ENCODE measurements at regions of chr19 and their contacts with region 1.

Region 1: DNA sequence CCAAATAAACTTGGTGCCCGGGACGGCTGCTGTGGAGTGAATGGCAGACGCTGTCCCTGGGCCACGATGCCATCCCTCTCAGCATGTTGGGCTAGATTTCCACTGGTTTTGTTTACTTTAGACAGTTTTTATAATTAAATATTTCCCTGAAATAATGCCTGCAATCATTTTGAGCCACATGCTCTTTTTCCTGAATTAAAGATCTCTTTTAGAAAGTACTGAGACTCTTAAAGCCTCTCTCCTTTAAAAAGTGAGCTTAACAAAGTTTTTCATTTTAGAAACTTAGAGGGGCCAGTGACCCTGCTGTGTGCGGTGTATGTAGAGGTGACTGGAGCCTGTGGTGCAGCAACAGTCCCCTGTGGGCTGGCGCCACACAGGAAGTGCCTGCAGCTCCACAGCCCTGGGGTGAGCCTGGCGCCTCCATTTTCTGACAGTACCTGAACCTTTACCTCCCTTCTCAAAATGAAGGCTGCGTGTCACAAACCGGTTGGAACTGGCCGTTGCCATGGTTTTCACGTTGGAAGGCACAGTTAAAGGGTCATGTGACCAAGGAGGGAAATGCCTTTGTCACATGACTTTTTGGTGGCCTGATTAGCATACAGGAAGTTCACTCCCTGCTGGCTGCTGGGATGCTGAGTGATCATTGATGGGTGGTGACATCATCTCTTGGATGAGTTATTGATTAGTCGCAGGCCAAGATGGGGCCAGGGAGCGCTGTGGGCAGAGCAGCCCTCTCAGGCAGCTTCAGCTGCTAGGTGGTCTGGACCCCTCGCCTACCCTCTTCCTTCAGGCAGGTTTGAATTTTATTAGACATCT is 26.3 kb downstream of the TSSK6 start:
- DNase-seq: peak; percentile 98
- H3K4me3 Mint-ChIP-seq: peak overlapping the region; percentile 76
- H3K27ac Mint-ChIP-seq: peak overlapping the region; percentile 98
- H3K4me1 Mint-ChIP-seq: peaks cover 36% of the 10 kb centered on the region
- H3K27me3 Mint-ChIP-seq: no peaks in the 10 kb centered on the region

Region 2: DNA sequence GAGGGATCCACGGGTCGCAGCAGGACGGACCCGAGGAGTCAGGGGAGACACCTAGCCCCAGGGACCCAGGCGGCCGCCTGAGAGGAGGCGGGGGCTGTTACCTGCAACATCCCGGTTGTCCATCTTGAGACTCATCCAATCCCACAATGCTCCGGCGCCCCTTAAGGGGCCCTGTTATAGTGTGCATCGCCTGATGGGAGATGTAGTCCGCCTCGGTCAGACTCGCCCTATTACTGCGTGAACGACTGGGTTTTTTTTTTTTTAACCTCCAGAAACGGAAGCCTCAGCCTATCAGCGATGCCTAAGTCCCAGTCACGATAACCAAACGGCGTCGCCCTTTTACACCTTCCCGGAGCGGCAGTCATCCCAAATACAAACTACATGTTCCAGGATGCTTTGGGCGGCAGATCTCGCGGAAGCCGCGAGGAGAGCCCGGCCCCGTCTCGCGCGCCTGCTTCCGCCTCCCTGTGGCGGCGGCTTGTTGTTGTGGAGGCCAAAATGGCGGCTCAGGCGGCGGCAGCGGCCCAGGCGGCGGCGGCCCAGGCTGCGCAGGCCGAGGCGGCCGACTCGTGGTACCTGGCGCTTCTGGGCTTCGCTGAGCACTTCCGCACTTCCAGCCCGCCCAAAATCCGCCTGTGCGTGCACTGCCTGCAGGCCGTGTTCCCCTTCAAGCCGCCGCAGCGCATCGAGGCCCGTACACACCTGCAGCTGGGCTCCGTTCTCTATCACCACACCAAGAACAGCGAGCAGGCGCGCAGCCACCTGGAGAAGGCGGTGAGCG is 168.5 kb before region 1 on chr19 and contains the starts of genes MAU2 and SUGP1:
- intact Hi-C with region 1: loop called (anchors 1 kb)
- DNase-seq: peak; percentile 97
- H3K4me3 Mint-ChIP-seq: peak within 1 kb of the TSS; percentile 89
- H3K27ac Mint-ChIP-seq: peak within 1 kb of the TSS; percentile 99
- H3K4me1 Mint-ChIP-seq: peaks cover 35% of the 10 kb centered on the region
- H3K27me3 Mint-ChIP-seq: no peaks in the 10 kb centered on the region
- total RNA-seq, gene MAU2: 61.8 and 73.0 TPM in 2 replicates
- total RNA-seq, gene SUGP1: 71.2 and 72.0 TPM in 2 replicates

Region 3: GRCh38 chr19:19354932-19355331 is 134.2 kb before region 1 on chr19:
- intact Hi-C with region 1: no loop called
- DNase-seq: no peak
- H3K4me3 Mint-ChIP-seq: no peak overlapping the region
- H3K27ac Mint-ChIP-seq: no peak overlapping the region
- H3K4me1 Mint-ChIP-seq: peaks cover 8% of the 10 kb centered on the region
- H3K27me3 Mint-ChIP-seq: no peaks in the 10 kb centered on the region

Region 4: GRCh38 chr19:19385108-19385899 is 103.8 kb before region 1 on chr19:
- intact Hi-C with region 1: loop called (anchors 1 kb)
- DNase-seq: peak; percentile 100
- H3K4me3 Mint-ChIP-seq: peak overlapping the region; percentile 85
- H3K27ac Mint-ChIP-seq: peak overlapping the region; percentile 89
- H3K4me1 Mint-ChIP-seq: peaks cover 36% of the 10 kb centered on the region
- H3K27me3 Mint-ChIP-seq: no peaks in the 10 kb centered on the region

Region 5: DNA sequence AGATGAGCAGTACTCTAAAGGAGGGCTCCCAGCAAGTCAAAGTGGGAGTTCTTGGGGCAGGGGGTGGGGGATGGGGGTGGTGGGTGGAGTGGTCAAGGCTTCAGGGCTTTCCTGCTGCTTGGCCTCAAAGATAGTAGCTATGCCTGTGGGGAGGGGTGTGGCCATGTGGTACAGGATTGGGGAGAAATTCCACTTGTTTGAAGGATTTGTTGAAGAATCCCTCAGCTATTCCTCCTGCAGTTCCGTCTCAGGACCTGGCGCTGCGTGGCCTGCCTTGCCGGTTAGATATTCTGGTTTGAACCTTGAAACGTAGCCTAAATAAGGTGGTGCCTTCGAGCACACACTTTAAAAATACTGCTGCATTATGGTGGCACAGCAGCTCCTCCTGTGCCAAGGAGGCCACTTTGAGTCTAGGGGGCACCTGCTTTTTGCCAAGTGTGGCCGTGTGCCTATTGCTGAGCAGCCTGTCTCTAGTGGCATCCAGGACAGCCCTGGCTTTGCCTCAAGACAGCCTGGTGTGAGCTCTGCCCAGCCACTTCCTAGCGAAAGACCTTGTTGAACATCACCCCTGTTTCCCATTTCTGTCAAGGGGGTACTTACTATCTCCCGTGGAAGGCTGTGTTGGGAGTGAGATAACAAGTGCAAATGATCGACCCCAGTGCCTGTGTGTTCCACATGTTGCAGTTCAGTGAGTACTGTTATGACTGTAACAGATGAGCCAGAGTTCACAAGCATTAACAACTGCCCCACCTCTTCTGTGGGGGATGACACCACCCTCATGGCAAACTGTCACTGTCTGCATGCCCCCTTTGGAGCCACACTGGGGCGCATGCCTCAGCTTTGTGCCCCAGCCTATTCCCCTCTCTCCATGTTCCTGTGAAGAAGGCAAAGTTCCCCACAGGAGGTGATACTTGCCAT is 78.5 kb before region 1 on chr19:
- intact Hi-C with region 1: loop called (anchors 1 kb)
- DNase-seq: peak; percentile 62
- H3K4me3 Mint-ChIP-seq: no peak overlapping the region
- H3K27ac Mint-ChIP-seq: peak overlapping the region; percentile 68
- H3K4me1 Mint-ChIP-seq: peaks cover 57% of the 10 kb centered on the region
- H3K27me3 Mint-ChIP-seq: no peaks in the 10 kb centered on the region

Region 6: GRCh38 chr19:19439186-19439502 is 49.9 kb before region 1 on chr19:
- intact Hi-C with region 1: no loop called
- DNase-seq: no peak
- H3K4me3 Mint-ChIP-seq: no peak overlapping the region
- H3K27ac Mint-ChIP-seq: peak overlapping the region; percentile 49
- H3K4me1 Mint-ChIP-seq: peaks cover 34% of the 10 kb centered on the region
- H3K27me3 Mint-ChIP-seq: no peaks in the 10 kb centered on the region

Region 7: GRCh38 chr19:19459707-19460251 is 29.3 kb before region 1 on chr19:
- intact Hi-C with region 1: loop called (anchors 1 kb)
- DNase-seq: peak; percentile 90
- H3K4me3 Mint-ChIP-seq: peak overlapping the region; percentile 89
- H3K27ac Mint-ChIP-seq: peak overlapping the region; percentile 98
- H3K4me1 Mint-ChIP-seq: peaks cover 62% of the 10 kb centered on the region
- H3K27me3 Mint-ChIP-seq: no peaks in the 10 kb centered on the region